PC-9 (cell line): ENCODE measurements at regions of chr5 and their contacts with region 1.

Region 1: DNA sequence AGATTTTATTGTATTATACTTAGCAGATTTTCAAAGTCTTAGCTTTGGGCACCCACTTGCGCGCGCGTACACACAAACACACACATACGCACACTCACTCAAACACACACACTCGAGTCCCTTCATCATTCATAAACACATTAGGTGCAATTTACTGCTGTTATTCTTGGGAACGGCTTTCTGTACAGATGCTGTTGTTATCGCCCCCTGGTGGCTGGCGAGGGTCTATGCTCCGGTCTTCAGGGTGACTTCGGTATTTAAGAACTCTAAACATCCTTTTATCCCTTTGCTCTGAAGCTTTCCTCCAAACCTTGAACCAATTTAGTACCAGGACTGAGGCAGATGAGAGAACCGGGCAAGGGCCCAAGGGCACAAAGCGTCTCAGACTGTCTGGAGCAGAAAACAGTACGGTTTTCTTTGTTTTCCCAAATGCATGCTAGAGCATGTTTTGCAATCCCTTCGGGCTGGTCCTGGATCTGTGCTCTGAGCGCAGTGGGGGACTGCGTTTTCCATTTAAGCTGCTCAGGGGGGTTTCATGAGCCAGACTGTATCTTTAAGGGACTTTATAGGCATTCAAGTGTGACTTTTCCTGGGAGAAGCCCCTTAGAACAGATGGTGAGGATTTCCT is 1.7 kb upstream of the SLIT3 start:
- DNase-seq: peak; percentile 42 to 56
- H3K4me3 ChIP-seq: no peak overlapping the region
- H3K27ac ChIP-seq: no peak overlapping the region
- H3K4me1 ChIP-seq: no peaks in the 10 kb centered on the region
- H3K27me3 ChIP-seq: 0 out of 2 replicates have a peak, but pooled peaks cover 10% of the 10 kb centered on the region
- CTCF ChIP-seq: peak; percentile 92

Region 2: GRCh38 chr5:168987543-168988300 is 314.9 kb before region 1 on chr5:
- CTCF ChIA-PET with region 1: no interaction called
- POLR2A ChIA-PET with region 1: no interaction called
- intact Hi-C with region 1: loop called (anchors 5 kb)
- DNase-seq: peak; percentile 44 to 61
- H3K4me3 ChIP-seq: no peak overlapping the region
- H3K27ac ChIP-seq: no peak overlapping the region
- H3K4me1 ChIP-seq: no peaks in the 10 kb centered on the region
- H3K27me3 ChIP-seq: peaks cover 65% of the 10 kb centered on the region
- CTCF ChIP-seq: peak; percentile 89

Region 3: GRCh38 chr5:169416583-169417196 is 114.1 kb after region 1 on chr5:
- CTCF ChIA-PET with region 1: no interaction called
- POLR2A ChIA-PET with region 1: no interaction called
- intact Hi-C with region 1: loop called (anchors 10 kb)
- DNase-seq: no peak
- H3K4me3 ChIP-seq: no peak overlapping the region
- H3K27ac ChIP-seq: no peak overlapping the region
- H3K4me1 ChIP-seq: no peaks in the 10 kb centered on the region
- H3K27me3 ChIP-seq: no peaks in the 10 kb centered on the region
- CTCF ChIP-seq: no peak